Activated B cell treated with CpG ODN at 0.5 μM for 24 hours (primary cell): ENCODE measurements at regions of chr4 and their contacts with region 1.

Region 1: GRCh38 chr4:88211473-88212252 is 53.2 kb upstream of the ABCG2 start:
- DNase-seq: no peak
- ATAC-seq: peak; percentile 37
- H3K4me3 Mint-ChIP-seq: no peak overlapping the region
- H3K27ac Mint-ChIP-seq: no peak overlapping the region
- H3K4me1 Mint-ChIP-seq: no peaks in the 10 kb centered on the region
- H3K27me3 Mint-ChIP-seq: peaks cover 7% of the 10 kb centered on the region
- CTCF ChIP-seq: peak; percentile 21

Region 2: GRCh38 chr4:87375719-87376291 is 835.9 kb before region 1 on chr4:
- CTCF ChIA-PET with region 1: no interaction called
- POLR2A ChIA-PET with region 1: no interaction called
- intact Hi-C with region 1: loop called (anchors 5 kb)
- DNase-seq: no peak
- ATAC-seq: peak; percentile 73
- H3K4me3 Mint-ChIP-seq: no peak overlapping the region
- H3K27ac Mint-ChIP-seq: no peak overlapping the region
- H3K4me1 Mint-ChIP-seq: peaks cover 7% of the 10 kb centered on the region
- H3K27me3 Mint-ChIP-seq: no peaks in the 10 kb centered on the region
- CTCF ChIP-seq: no peak

Region 3: DNA sequence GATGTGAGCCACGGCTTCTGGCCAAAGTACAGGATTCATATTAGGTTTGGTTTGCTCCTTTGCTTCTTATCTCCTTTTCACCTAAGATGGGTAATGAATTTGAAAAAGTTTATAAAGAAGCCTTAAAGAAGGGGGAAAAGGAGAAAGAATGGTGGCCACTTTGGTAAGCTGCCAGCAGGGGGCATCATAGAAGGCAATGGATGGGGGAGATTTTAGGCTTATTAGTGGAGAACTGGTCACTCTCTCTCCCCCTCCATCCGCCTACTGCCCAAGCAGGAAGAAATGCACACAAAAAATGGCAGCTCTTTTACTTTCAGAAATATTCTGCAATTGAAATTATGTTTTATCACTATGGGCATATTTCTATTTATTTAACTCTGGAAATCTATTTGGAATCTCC is 714.5 kb before region 1 on chr4:
- CTCF ChIA-PET with region 1: no interaction called
- POLR2A ChIA-PET with region 1: no interaction called
- intact Hi-C with region 1: loop called (anchors 2 kb)
- DNase-seq: no peak
- ATAC-seq: no peak
- H3K4me3 Mint-ChIP-seq: no peak overlapping the region
- H3K27ac Mint-ChIP-seq: no peak overlapping the region
- H3K4me1 Mint-ChIP-seq: peaks cover 5% of the 10 kb centered on the region
- H3K27me3 Mint-ChIP-seq: no peaks in the 10 kb centered on the region
- CTCF ChIP-seq: no peak

Region 4: GRCh38 chr4:87679449-87680169 is 532.1 kb before region 1 on chr4:
- CTCF ChIA-PET with region 1: interaction called, 24 read pairs
- POLR2A ChIA-PET with region 1: no interaction called
- intact Hi-C with region 1: loop called (anchors 1 kb)
- DNase-seq: no peak
- ATAC-seq: no peak
- H3K4me3 Mint-ChIP-seq: no peak overlapping the region
- H3K27ac Mint-ChIP-seq: no peak overlapping the region
- H3K4me1 Mint-ChIP-seq: no peaks in the 10 kb centered on the region
- H3K27me3 Mint-ChIP-seq: no peaks in the 10 kb centered on the region
- CTCF ChIP-seq: peak; percentile 61

Region 5: DNA sequence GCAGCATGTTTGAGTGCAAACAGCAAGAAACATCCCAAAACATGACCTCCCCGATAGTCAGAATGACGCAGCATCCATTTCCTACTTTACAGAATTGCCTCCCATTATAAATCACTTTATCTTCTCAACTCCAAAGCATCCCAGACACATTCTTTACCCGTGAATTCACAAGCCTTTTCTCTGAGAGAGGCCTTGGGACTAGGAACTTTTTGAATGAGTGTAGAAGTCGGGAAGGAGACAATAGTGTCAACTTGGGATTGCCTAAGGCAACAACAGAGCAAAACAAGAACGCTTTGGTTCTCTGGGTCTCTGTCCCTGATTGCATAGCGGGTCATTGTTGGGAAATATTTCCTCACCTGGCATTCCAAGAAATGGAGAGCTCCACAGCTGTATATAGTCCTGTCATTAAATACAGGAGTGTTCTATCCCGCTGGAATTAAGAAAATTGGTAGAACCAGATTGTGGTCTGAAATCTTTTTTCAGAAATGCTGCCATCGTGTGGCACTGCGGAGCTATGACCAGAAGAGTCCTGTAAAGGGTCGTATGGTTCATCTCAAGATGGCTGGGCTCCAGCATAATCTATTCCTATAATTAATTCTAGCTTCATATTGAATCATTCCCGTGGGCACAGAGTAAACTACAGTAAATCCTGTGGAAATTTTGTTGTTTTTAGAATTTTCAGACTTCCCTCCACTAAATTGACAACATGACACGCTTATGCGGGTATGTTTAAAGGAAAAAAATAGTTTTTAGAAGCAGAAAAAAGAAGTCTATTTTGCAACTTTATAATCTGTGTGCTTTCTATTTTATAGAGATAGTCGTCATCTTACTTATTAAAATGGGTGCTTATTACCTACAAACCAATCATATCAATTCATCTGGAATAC is 238.1 kb before region 1 on chr4:
- CTCF ChIA-PET with region 1: interaction called, 6 read pairs
- POLR2A ChIA-PET with region 1: no interaction called
- intact Hi-C with region 1: loop called (anchors 5 kb)
- DNase-seq: no peak
- ATAC-seq: peak; percentile 47
- H3K4me3 Mint-ChIP-seq: no peak overlapping the region
- H3K27ac Mint-ChIP-seq: no peak overlapping the region
- H3K4me1 Mint-ChIP-seq: peaks cover 9% of the 10 kb centered on the region
- H3K27me3 Mint-ChIP-seq: peaks cover 9% of the 10 kb centered on the region
- CTCF ChIP-seq: no peak

Region 6: GRCh38 chr4:88033309-88033708 is 178.4 kb before region 1 on chr4:
- CTCF ChIA-PET with region 1: interaction called, 64 read pairs
- POLR2A ChIA-PET with region 1: interaction called, 6 read pairs
- intact Hi-C with region 1: loop called (anchors 1 kb)
- DNase-seq: no peak
- ATAC-seq: no peak
- H3K4me3 Mint-ChIP-seq: no peak overlapping the region
- H3K27ac Mint-ChIP-seq: no peak overlapping the region
- H3K4me1 Mint-ChIP-seq: no peaks in the 10 kb centered on the region
- H3K27me3 Mint-ChIP-seq: no peaks in the 10 kb centered on the region
- CTCF ChIP-seq: no peak

Region 7: GRCh38 chr4:88054901-88055300 is 156.8 kb before region 1 on chr4:
- CTCF ChIA-PET with region 1: no interaction called
- POLR2A ChIA-PET with region 1: no interaction called
- intact Hi-C with region 1: no loop called
- DNase-seq: no peak
- ATAC-seq: no peak
- H3K4me3 Mint-ChIP-seq: no peak overlapping the region
- H3K27ac Mint-ChIP-seq: no peak overlapping the region
- H3K4me1 Mint-ChIP-seq: no peaks in the 10 kb centered on the region
- H3K27me3 Mint-ChIP-seq: no peaks in the 10 kb centered on the region
- CTCF ChIP-seq: no peak

Region 8: DNA sequence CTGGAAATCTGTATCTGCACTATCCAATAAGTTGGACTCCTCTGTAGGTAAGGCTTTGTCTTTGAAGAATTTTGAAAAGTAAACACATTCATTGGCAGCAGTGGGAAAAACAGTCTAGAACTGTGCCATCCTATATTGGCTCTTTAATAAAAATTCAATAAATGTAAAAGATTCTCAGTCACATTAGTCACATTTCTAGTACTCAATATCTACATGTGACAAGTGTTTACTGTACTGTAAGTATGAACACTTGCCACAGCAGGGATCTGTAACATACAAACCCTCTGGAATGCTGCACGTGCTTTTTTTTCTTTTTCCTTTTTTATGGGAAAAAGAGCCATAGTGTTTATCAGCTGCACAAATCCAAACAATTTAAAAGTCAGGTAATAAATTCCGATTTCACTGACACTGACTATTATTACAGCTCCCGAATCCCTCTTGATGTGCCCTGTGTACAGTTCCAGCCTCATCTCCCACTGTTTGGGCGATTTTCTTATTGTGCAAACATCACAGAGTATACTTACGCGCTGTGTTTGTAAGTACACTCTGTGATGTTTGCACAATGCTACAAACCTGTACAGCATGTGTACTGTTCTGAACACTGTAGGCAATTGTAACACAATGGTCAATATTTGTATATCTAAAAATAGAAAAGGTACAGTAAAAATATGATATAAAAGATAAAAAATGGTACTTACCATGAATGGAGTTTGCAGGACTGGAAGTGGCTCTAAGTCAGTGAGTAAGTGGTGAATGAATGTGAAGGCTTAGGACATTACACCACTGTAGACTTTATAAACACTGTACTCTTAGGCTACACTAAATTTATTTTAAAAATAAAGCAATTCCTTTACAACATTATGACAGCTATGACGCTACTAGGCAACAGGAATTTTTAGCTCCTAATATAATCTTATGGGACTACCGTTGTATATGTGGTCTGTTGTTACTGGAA is 303.2 kb after region 1 on chr4:
- CTCF ChIA-PET with region 1: interaction called, 201 read pairs
- POLR2A ChIA-PET with region 1: no interaction called
- intact Hi-C with region 1: no loop called
- DNase-seq: no peak
- ATAC-seq: no peak
- H3K4me3 Mint-ChIP-seq: no peak overlapping the region
- H3K27ac Mint-ChIP-seq: no peak overlapping the region
- H3K4me1 Mint-ChIP-seq: no peaks in the 10 kb centered on the region
- H3K27me3 Mint-ChIP-seq: no peaks in the 10 kb centered on the region
- CTCF ChIP-seq: no peak